ENCODE measurements at regions of chr21 and their contacts with region 1.

Region 1: DNA sequence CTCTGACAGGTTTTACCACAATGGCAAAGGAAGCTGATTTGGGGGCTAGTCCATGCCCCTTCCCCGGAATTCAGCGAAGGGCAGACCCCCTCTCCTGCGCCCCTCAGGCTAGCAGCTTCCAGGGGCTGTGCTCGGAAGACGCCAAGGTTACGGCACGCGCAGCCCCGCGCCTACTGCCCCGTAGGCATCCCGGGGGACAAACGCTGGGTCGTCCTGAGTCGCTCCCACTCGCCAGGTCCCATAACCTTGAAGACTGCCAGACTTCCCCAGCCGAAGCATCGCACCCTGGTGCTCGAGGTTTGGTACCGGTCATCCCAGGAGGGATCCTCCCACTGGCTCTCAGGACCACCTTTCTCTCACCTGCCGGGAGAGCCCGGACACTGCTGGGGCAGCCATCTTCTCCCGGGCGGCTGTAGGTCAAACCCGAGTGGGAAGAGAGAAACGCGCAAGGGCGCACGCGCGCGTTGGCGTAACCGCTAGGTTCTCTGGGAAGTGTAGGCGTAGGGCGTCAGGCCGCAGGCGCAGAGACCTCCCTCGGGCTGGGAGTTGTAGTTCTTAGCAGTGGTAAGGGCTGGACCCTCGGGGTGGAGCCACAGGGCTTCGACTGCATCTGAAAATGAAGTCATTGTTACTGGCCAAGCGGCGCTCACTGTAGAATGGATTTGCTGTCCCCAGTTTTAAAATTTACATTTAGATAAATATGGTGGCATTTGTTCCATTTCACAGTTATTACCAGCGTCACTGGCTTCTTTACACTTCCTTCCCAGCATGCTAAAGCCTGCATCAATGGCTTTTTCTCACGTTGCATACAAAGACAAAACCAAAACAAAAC is at the start of gene ATP5PO:
- DNase-seq: peak; percentile 99
- ATAC-seq: peak; percentile 99
- H3K4me3 ChIP-seq: peak within 1 kb of the TSS; percentile 81 to 94
- H3K27ac ChIP-seq: peak within 1 kb of the TSS in 1 of 2 donors; percentile 53
- H3K4me1 ChIP-seq: peaks cover 0 to 5% of the 10 kb centered on the region in 2 donors
- H3K27me3 ChIP-seq: no peaks in the 10 kb centered on the region
- total RNA-seq, gene ATP5PO: 112 to 119 TPM

Region 2: DNA sequence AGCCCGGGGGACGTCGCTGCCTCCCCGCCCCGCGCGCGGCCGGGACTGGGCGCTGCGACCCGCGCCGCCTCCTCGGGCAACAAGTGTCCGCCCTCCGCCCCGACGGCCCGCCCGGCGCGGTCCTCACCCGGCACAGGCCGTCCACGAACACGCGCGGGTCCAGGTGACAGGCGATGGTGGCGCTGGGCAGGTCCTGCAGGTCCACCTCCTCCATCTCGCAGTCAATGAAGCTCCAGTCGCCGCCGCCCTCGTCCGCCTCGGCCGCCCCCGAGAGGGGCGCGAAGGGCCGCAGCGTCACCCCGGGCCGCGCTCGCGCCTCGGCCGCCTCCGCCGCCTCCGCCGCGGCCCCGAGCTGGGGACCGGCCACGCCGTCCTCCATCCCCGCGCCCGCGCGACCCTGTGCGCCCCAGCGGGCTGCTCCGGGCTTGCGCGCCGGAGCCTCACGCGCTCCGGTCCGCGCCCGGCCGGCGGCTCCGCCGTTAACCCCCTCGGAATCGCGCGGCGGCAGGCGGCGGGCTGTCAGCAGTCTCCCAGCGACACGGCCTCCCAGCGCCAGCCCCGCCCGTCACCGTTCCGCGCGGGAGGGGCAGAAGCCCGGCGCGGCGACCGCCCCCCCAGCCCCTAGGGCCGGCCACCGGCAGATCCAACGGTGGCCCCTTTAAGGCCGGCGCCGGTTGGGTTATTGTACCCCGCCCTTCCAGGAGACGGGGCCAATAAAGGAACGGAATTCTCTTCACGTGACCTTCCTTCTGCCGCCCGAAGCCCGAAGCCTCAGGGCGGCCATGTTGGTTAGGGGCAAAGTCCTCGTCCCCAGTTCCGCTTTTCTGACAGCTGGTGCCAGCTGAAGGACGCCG is 699.3 kb after region 1 on chr21 and contains the start of gene RCAN1:
- intact Hi-C with region 1: loop called in 1 of 2 experiments (anchors 10 kb)
- DNase-seq: peak; percentile 94
- ATAC-seq: peak; percentile 97
- H3K4me3 ChIP-seq: peak within 1 kb of the TSS; percentile 78 to 81
- H3K27ac ChIP-seq: peak within 1 kb of the TSS; percentile 43 to 85
- H3K4me1 ChIP-seq: peaks cover 0 to 2% of the 10 kb centered on the region in 2 donors
- H3K27me3 ChIP-seq: no peaks in the 10 kb centered on the region
- total RNA-seq, gene RCAN1: 52.3 to 99.9 TPM

Measured in aorta (tissue), 5 donors.